MCF 10A (cell line): ENCODE measurements at regions of chr13 and their contacts with region 1.

Region 1: GRCh38 chr13:27533155-27533643 is 82.8 kb upstream of the MTIF3 start:
- DNase-seq: peak; percentile 74
- H3K4me3 Mint-ChIP-seq: no peak overlapping the region
- H3K27ac Mint-ChIP-seq: no peak overlapping the region
- H3K4me1 Mint-ChIP-seq: peaks cover 8% of the 10 kb centered on the region
- H3K27me3 Mint-ChIP-seq: no peaks in the 10 kb centered on the region
- CTCF ChIP-seq: peak; percentile 80

Region 2: DNA sequence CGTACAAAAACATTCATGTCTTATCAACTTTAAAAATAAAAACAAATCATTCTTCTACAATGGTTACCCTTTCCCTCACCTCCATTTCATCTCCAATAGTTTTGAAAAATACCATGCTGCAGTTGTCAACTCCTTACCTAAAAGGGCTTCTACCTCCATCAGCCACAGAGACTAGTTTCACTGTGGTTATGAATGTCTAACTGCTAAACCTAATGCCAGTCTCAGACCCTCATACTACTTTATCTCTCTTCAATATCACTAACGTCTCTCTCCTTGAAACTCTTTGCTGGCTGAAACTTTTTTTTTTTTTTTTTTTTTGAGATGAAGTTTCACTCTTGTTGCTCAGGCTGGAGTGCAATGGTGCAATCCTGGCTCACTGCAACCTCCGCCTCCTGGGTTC is 60.1 kb after region 1 on chr13:
- CTCF ChIA-PET with region 1: no interaction called
- POLR2A ChIA-PET with region 1: no interaction called
- intact Hi-C with region 1: no loop called
- DNase-seq: no peak
- H3K4me3 Mint-ChIP-seq: no peak overlapping the region
- H3K27ac Mint-ChIP-seq: no peak overlapping the region
- H3K4me1 Mint-ChIP-seq: no peaks in the 10 kb centered on the region
- H3K27me3 Mint-ChIP-seq: no peaks in the 10 kb centered on the region
- CTCF ChIP-seq: no peak

Region 3: DNA sequence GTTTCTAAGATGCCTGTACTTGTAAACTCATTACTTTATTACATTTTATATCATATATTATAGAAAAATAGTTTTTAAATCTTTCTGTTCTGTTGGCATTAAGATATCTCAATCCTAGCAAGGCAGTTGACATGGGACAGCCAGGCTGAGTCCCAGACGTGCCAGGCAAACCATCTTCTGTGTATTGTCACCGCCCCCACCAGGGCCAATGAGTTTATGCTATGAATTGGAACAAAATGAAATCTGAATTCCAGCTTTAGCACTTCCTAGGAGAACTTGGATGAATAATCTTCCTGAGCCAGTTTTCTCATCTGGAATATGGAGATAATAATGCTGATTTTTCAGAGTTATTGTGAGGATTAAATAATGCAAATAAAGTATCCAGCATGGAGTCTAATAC is 179.2 kb after region 1 on chr13:
- CTCF ChIA-PET with region 1: no interaction called
- POLR2A ChIA-PET with region 1: no interaction called
- intact Hi-C with region 1: loop called (anchors 5 kb)
- DNase-seq: peak; percentile 4
- H3K4me3 Mint-ChIP-seq: no peak overlapping the region
- H3K27ac Mint-ChIP-seq: no peak overlapping the region
- H3K4me1 Mint-ChIP-seq: no peaks in the 10 kb centered on the region
- H3K27me3 Mint-ChIP-seq: no peaks in the 10 kb centered on the region
- CTCF ChIP-seq: no peak